Common myeloid progenitor, CD34-positive (primary cell): ENCODE measurements at regions of chr13 and their contacts with region 1.

Region 1: DNA sequence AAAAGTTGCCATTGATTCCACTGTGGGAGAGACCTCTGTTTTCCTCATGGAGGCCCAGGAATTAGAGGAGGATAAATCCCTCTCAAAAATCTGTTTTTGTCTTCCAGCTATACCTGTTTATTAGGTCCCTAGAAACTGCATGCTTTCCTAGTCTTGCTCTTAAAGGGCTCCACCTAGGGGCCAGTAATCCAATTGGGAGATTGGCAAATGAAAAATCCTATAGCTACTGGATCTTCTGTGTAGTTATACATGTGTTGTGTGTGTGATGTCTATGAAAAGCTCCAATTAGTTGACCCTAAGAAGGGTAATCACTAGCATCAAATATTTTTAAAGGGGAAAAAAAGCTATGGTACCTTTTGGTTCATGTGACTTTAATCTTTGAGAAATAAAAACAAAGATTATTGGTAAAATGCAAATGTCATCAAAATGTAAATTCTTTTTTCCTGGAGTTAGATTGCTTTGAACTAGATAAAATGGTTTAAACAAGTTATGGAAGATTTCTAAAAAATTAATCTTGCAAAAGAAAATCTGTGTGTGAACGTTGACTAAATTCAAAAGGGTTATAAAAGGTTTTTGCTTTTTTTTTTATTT is 63.4 kb upstream of the C1QTNF9B start:
- DNase-seq: peak; percentile 23 to 46 (median 43)
- H3K4me3 ChIP-seq: no peak overlapping the region
- H3K27ac ChIP-seq: no peak overlapping the region
- H3K4me1 ChIP-seq: no peaks in the 10 kb centered on the region
- H3K27me3 ChIP-seq: peaks cover 0 to 7% (median 0%) of the 10 kb centered on the region in 5 experiments

Region 2: DNA sequence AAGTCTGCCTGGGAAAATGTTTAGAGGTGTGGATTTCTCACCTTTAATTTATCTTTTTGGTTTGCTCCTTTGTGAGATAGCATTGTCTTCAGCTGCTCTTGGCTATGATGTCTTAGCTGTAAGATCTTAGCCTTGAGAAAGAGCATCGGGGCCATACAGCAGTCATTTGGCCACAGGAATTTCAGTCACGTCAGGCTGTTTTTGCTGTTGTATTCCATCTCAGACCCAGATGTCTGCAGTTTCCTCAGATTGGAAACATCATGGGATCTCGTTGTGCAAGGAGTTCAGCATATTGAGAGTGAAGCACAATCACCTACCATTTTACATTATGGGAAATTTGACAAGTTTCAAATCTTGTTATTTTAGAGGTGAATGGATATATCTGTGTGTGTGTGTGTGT is 26.0 kb after region 1 on chr13:
- CTCF ChIA-PET with region 1: interaction called, 14 read pairs
- POLR2A ChIA-PET with region 1: no interaction called
- DNase-seq: no peak
- H3K4me3 ChIP-seq: no peak overlapping the region
- H3K27ac ChIP-seq: no peak overlapping the region
- H3K4me1 ChIP-seq: no peaks in the 10 kb centered on the region
- H3K27me3 ChIP-seq: peaks cover 0 to 16% (median 0%) of the 10 kb centered on the region in 5 experiments